ENCODE measurements at regions of chr1 and their contacts with region 1.

Region 1: DNA sequence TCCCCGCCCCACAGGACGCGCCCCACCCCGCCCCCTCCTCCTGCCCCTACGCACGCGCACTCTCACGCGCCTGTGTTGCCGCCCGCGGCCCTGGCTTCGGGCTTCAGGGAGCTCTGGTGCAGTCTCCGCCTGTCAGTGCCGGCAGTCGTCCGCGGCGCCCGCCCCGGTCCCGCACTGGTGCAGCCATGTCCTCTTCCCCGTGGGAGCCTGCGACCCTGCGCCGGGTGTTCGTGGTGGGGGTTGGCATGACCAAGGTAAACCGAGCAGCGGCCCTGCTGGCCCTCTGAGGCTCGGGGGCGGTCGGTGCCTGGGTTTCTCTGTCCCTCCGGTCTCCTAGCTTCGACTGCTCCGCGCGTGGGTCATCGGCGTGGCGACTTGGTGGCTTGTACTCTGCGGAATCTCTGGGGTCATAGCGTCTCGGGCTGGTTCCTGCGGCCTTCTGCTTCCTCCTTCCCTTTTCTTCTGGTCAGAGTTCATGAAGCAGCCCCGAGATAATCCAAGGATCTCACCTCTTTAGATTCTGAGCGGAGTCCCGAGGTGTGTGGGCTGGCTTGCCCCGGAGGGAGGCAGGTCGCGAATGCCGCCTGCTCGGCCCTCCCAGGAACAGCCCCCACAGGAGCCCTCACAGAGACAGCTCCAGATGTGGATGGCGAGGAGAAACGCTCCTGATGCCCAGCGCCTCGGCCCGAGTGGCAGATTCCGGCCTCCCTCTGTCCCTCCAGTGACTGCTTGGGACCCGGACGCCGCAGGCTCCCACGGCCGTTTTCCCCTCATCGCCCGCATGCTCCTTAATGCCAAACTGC is at the start of gene SCP2:
- DNase-seq: peak; percentile 86
- H3K4me3 ChIP-seq: peak within 1 kb of the TSS; percentile 62
- H3K27ac ChIP-seq: peak within 1 kb of the TSS; percentile 38
- H3K4me1 ChIP-seq: no peaks in the 10 kb centered on the region
- H3K27me3 ChIP-seq: no peaks in the 10 kb centered on the region
- CTCF ChIP-seq: no peak
- total RNA-seq, gene SCP2: 178 to 325 TPM

Region 2: GRCh38 chr1:52697795-52698674 is 229.4 kb before region 1 on chr1 and contains the start of gene COA7:
- intact Hi-C with region 1: loop called (anchors 10 kb)
- DNase-seq: peak; percentile 92
- H3K4me3 ChIP-seq: peak within 1 kb of the TSS; percentile 81
- H3K27ac ChIP-seq: peak within 1 kb of the TSS; percentile 86
- H3K4me1 ChIP-seq: no peaks in the 10 kb centered on the region
- H3K27me3 ChIP-seq: no peaks in the 10 kb centered on the region
- CTCF ChIP-seq: no peak
- total RNA-seq, gene COA7: 14.8 to 23.8 TPM

Region 3: DNA sequence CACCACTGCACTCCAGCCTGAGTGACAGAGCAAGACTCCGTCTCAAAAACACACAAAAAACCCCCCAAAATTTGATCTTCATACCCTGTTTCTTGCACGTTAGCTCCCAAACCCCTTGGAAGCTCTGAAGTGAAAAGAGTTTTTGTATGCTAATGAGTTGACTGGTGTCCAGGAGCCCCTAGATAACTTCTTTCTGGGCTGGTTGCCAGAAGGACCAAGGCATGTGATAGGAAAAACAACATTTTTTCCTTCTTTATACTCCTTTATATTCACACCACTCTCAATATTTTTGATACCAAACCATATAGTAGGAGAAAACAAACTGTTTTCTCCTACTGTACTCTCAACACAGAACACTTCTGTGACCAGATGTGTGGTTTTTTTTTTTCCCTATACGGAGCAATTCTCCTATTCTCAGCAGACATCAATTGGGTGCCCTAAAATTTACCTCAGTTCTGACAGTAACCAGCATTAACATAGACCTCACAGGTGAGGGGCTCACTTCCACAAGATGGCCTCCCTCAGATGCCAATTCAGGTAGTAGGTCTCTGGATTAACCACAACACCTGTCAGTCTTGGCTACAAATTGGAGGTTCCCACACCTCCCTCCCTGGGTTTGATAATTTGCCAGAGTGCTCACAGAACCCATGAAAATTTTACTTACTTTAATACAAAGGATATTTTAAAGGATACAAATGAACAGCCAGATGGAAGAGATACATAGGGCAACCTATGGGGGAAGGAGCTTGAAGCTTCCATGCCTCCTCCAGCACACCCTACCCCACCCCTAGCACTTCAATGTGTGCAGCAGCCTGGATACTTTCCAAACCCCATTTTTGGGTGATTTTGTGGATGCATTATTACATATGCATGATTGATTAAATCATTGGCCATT is 175.6 kb before region 1 on chr1:
- intact Hi-C with region 1: no loop called
- DNase-seq: no peak
- H3K4me3 ChIP-seq: no peak overlapping the region
- H3K27ac ChIP-seq: no peak overlapping the region
- H3K4me1 ChIP-seq: no peaks in the 10 kb centered on the region
- H3K27me3 ChIP-seq: no peaks in the 10 kb centered on the region
- CTCF ChIP-seq: no peak

Region 4: GRCh38 chr1:52877554-52877953 is 49.9 kb before region 1 on chr1:
- intact Hi-C with region 1: no loop called
- DNase-seq: no peak
- H3K4me3 ChIP-seq: no peak overlapping the region
- H3K27ac ChIP-seq: no peak overlapping the region
- H3K4me1 ChIP-seq: no peaks in the 10 kb centered on the region
- H3K27me3 ChIP-seq: no peaks in the 10 kb centered on the region
- CTCF ChIP-seq: no peak

Measured in colonic mucosa (tissue), 4 donors.